Heart left ventricle (tissue), 16 donors: ENCODE measurements at regions of chr18 and their contacts with region 1.

Region 1: DNA sequence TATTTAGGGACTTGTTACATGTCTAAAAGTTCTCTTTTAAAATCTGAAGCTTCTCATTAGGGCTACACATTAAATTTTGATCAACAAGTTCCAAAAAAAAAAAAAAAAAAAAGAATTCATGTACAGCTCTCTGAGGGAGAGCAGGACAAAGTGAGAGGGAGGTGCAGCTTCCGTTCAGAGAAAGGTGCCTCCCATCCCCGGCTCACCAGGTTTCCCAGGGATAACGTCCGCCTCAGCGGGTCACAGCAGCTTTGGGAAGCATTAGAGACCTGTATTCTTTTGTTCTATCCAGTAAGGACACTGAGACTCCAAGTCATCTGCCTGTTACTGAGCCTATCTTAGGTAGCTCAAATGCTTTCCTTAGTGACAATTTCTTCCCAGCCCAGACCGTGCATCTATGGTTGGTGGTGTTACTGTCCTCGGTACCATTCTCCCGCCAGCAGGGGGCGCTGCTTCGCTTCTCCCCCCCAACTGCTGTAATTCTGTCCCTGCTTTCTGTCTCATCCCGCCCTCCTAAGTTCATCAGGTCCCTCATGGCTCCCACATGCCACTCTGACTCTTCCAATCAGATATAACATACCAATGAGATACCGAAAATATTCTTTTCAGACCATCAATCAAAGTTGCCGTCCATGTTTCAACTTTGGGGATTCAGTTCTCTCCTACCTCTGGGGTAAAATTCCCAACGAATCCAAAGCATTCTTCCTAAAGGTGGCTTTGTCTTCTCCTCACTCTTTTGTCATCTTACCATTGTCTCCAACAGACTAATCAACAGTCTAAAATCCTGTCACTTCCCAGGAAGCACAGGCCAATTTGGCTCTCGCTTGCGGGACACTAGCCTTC is 466.5 kb downstream of the METTL4 start:
- DNase-seq: peak in 4 of 5 donors; percentile 21 to 68 (median 30)
- ATAC-seq: peak in 3 of 4 donors; percentile 65 to 80 (median 74)
- H3K4me3 ChIP-seq: no peak overlapping the region
- H3K27ac ChIP-seq: no peak overlapping the region
- H3K4me1 ChIP-seq: no peaks in the 10 kb centered on the region
- H3K27me3 ChIP-seq: no peaks in the 10 kb centered on the region
- CTCF ChIP-seq: peak; percentile 48 to 83 (median 66)
- POLR2A ChIP-seq: no peak

Region 2: GRCh38 chr18:2049986-2050385 is 54.9 kb before region 1 on chr18:
- intact Hi-C with region 1: no loop called
- DNase-seq: no peak
- ATAC-seq: peak in 2 of 4 donors; percentile 22 to 85
- H3K4me3 ChIP-seq: no peak overlapping the region
- H3K27ac ChIP-seq: no peak overlapping the region
- H3K4me1 ChIP-seq: peaks cover 0 to 9% (median 4%) of the 10 kb centered on the region in 12 donors
- H3K27me3 ChIP-seq: no peaks in the 10 kb centered on the region
- CTCF ChIP-seq: no peak
- POLR2A ChIP-seq: no peak

Region 3: DNA sequence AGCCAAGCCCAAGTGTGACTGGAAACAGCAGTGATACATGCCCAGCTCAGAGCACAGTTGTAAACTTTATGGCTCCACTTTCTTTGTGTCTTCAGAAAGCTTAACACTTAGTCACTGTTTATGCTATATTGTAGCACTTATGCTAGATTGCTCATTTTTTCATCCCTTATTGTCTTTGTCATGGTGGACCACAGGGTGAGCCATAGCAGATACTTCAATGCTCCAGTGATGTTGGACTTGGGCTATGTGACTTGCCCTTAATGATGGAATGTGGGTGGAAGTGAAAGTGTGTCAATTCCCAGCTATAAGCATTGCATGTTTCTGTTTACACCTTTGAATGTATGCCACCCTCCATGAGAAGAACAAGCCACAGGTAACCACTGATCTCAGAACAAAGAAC is 64.9 kb after region 1 on chr18:
- intact Hi-C with region 1: loop called in 1 of 10 experiments (anchors 10 kb)
- DNase-seq: no peak
- ATAC-seq: no peak
- H3K4me3 ChIP-seq: no peak overlapping the region
- H3K27ac ChIP-seq: no peak overlapping the region
- H3K4me1 ChIP-seq: peaks cover 0 to 15% (median 0%) of the 10 kb centered on the region in 12 donors
- H3K27me3 ChIP-seq: no peaks in the 10 kb centered on the region
- CTCF ChIP-seq: no peak
- POLR2A ChIP-seq: no peak

Region 4: GRCh38 chr18:2223849-2224248 is 119.0 kb after region 1 on chr18:
- intact Hi-C with region 1: loop called in 7 of 10 experiments (anchors 2 to 10 kb)
- DNase-seq: peak in 1 of 5 donors; percentile 26
- ATAC-seq: peak in 3 of 4 donors; percentile 45 to 70 (median 46)
- H3K4me3 ChIP-seq: peak overlapping the region in 9 of 12 donors; percentile 16 to 43 (median 24)
- H3K27ac ChIP-seq: no peak overlapping the region
- H3K4me1 ChIP-seq: no peaks in the 10 kb centered on the region
- H3K27me3 ChIP-seq: peaks cover 0 to 4% (median 0%) of the 10 kb centered on the region in 9 donors
- CTCF ChIP-seq: peak; percentile 32 to 68 (median 53)
- POLR2A ChIP-seq: no peak

Region 5: GRCh38 chr18:2536493-2536892 is 431.7 kb after region 1 on chr18:
- intact Hi-C with region 1: loop called in 8 of 10 experiments (anchors 5 to 10 kb)
- DNase-seq: no peak
- ATAC-seq: peak in 1 of 4 donors; percentile 32
- H3K4me3 ChIP-seq: no peak overlapping the region
- H3K27ac ChIP-seq: no peak overlapping the region
- H3K4me1 ChIP-seq: no peaks in the 10 kb centered on the region
- H3K27me3 ChIP-seq: no peaks in the 10 kb centered on the region
- CTCF ChIP-seq: no peak
- POLR2A ChIP-seq: no peak

Region 6: DNA sequence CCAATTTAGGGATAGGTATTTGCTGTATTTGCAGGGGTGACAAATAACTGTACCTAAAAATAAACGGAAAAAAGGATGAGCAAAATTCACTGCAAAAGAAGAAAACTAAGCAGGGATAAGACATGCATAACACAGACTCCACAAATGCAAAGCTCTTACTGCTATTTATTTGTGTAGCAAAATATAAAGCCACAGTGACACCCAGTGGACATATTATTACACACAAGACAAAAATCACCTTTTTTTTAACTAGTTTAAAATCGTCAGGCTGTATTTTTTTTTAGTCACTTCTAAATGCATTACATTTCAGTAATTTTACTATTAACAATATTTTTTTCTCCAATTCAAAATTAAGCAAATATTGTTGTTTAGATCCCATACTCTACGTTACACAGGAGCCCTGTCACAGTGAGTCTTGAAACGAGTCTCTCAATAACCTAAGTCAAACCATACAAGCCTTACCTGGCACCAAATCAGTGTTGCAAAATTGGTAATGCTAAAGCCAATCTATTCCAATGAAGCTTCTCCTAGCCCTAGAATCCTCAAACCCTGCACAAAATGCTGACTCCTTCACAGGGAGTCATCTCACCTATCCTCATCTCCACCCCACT is 442.7 kb after region 1 on chr18:
- intact Hi-C with region 1: loop called (anchors 2 to 10 kb)
- DNase-seq: no peak
- ATAC-seq: no peak
- H3K4me3 ChIP-seq: no peak overlapping the region
- H3K27ac ChIP-seq: no peak overlapping the region
- H3K4me1 ChIP-seq: no peaks in the 10 kb centered on the region
- H3K27me3 ChIP-seq: no peaks in the 10 kb centered on the region
- CTCF ChIP-seq: peak; percentile 38 to 71 (median 53)
- POLR2A ChIP-seq: no peak